Activated T-helper 2 cell treated with anti-CD3 and anti-CD28 coated beads, Interferon-gamma antibody, Interleukin-2, Interleukin-4, amounts not matched to agents 10 μg/mL and 5 μg/mL and 100 μg/mL, durations not matched to agents 14 hours and 24 hours and 36 hours (primary cell): ENCODE measurements at regions of chr1 and their contacts with region 1.

Region 1: DNA sequence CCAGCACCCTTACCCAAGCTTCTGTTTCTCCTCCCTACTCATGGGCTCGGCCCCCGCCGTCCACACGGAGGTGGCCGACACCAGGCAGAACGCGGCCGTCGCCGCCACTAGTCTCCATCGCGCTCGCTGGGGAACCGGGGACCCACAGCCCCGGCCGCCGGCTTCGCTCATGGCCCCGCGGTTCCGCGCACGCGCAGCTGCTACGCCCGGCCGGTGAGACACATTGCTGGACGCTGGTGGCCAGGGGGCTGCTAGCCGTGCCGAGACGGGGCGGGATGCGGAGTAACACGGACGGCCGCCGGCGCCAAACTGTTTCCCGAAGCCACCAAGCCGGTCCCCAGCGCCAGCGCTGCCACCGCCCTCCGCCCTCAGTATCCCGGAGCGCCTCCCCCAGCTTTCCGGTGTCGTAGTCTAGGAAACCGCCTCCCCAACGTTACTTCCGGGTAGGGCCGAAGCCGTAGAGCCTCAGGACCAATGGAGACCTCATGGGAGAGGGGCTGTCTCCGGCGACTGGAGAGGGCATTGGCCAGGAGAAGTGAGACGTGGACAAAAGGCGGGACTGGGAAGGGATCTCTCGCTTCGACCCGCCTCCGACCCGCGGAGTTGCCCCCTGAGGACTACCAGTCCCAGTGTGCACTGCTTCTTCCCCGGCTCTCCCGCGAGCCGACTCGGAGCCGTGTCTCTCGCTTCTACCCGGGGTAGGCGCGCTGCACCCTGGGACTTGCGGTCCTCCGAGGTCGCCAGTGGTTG is at the start of gene EDEM3:
- DNase-seq: peak; percentile 98
- H3K4me3 Mint-ChIP-seq: peak within 1 kb of the TSS; percentile 87
- H3K27ac Mint-ChIP-seq: peak within 1 kb of the TSS; percentile 79
- H3K4me1 Mint-ChIP-seq: peaks cover 41% of the 10 kb centered on the region
- H3K27me3 Mint-ChIP-seq: peaks cover 19% of the 10 kb centered on the region
- total RNA-seq, gene EDEM3: 25.3 and 30.2 TPM in 2 replicates

Region 2: DNA sequence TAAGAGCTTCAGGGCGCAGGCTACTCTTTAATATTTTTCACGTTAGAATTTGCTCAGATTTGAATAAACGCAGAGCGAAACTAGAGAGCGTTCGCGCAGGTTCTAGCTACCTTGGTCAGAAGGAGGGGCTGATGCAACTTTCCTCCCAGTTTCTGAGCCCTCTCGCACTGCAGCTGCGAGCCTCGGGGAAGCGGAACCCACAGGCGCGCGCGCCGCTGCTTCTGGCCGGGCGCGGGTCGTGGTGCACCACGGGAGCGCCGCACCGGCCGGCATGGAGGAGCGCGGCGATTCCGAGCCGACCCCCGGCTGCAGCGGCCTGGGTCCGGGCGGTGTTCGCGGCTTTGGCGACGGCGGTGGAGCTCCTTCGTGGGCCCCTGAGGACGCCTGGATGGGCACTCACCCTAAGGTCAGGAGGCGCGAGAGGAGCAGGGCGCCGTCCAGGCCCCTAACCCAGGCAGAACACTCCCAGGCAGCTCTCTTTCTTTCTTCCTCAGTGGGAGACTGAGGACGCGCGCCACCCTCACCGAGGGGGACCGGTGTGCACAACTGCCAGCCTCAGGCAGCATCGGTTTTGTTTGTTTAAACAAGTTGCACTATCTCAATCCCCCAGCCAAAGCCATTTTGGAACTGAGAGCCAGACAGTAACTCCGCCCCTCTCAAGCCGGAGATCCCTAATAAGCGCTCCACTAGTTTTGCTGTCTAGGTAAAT is 703.0 kb before region 1 on chr1 and contains the start of gene TSEN15:
- intact Hi-C with region 1: loop called (anchors 10 kb)
- DNase-seq: peak; percentile 69
- H3K4me3 Mint-ChIP-seq: peak within 1 kb of the TSS; percentile 100
- H3K27ac Mint-ChIP-seq: peak within 1 kb of the TSS; percentile 96
- H3K4me1 Mint-ChIP-seq: peaks cover 30% of the 10 kb centered on the region
- H3K27me3 Mint-ChIP-seq: peaks cover 31% of the 10 kb centered on the region
- total RNA-seq, gene TSEN15: 35.1 TPM in 2 replicates

Region 3: GRCh38 chr1:184866991-184867788 is 112.5 kb after region 1 on chr1:
- intact Hi-C with region 1: loop called (anchors 1 kb)
- DNase-seq: peak; percentile 53
- H3K4me3 Mint-ChIP-seq: peak overlapping the region; percentile 60
- H3K27ac Mint-ChIP-seq: peak overlapping the region; percentile 93
- H3K4me1 Mint-ChIP-seq: peaks cover 40% of the 10 kb centered on the region
- H3K27me3 Mint-ChIP-seq: peaks cover 4% of the 10 kb centered on the region

Region 4: DNA sequence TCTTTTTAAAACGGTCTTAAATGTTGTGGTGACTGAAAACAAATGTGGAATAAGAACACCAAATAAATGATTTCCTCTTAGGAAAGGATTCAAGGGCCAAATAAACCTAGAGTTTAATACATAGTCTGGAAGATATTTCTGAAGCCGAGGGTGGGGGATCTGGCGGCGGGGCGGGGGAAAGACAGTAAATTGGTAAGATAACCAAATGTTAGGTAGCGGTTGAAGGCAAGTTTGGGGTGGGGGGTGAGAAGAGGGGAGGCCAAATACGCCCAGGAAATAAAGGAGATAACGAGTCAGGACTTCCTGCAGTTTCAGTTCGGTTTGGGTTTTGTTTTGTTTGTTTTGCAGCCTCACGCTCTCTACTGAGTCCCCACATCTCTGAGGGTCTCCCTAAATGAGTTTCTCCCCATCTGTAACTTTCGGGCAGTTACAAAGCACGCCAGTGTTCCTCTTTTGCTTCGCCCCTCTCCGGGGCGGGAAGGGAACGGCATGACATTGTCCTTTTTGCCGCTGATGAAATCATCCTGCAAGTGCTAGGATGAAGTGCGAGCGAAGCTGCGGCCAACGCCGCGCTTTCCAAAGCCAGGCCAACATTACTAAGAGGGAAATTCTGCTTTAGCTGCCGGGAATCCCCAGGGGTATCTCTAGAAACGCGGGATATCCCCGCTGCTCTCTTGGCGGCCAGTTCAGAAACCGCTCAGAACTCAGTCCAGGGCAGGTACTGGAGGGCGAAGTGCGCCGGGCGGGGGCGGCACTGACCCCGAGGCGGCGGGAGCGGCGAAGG is 218.8 kb after region 1 on chr1:
- intact Hi-C with region 1: loop called (anchors 2 kb)
- DNase-seq: no peak
- H3K4me3 Mint-ChIP-seq: peak overlapping the region; percentile 90
- H3K27ac Mint-ChIP-seq: peak overlapping the region; percentile 96
- H3K4me1 Mint-ChIP-seq: peaks cover 57% of the 10 kb centered on the region
- H3K27me3 Mint-ChIP-seq: peaks cover 13% of the 10 kb centered on the region

Region 5: DNA sequence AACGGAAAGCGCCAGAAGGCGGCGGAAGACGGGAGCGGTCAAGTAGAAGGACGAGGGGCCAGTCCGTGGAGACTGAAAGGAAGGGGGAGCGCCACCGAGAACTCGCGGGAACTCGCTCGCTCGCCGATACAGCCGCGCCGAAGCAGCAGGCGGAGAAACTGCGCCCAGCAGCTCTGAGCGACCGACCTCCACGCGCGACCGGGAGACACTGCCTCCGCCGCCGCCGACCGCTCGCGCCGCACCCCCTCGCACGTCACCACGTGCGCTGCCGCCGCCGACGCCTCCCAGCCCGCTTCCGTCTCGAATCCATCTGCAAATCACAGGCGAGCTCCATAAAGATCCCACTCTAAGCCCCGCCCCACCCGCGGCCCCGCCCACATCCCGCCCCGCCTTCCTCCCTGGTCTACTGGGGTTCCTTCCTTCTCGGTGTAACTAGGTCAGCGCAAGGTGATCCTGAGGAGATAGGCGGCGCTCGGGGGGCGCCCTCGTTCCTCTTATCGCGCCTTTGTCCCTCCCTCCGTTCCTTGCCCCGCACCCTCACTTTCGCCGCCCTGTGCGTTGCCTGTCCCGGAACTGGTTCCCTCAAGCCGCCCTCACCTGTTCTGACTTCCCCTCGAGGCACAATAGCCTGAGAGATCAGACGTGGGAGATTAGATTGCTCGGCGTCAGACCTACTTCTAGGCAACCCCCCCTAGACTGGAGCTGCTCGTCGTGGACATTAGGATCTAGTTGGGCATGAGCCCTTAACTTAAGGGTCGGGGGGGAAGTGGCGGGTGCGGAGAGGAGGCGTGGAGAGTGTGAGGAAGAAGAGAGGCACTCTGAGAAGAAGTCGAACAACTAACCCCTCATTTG is 562.6 kb after region 1 on chr1 and contains the start of gene IVNS1ABP:
- intact Hi-C with region 1: loop called (anchors 2 kb)
- DNase-seq: peak; percentile 93
- H3K4me3 Mint-ChIP-seq: peak within 1 kb of the TSS; percentile 90
- H3K27ac Mint-ChIP-seq: peak within 1 kb of the TSS; percentile 98
- H3K4me1 Mint-ChIP-seq: peaks cover 37% of the 10 kb centered on the region
- H3K27me3 Mint-ChIP-seq: no peaks in the 10 kb centered on the region
- total RNA-seq, gene IVNS1ABP: 143 and 148 TPM in 2 replicates